ENCODE measurements at regions of chr17 and their contacts with region 1.

Region 1: GRCh38 chr17:39153599-39154051 is 2.2 kb upstream of the PLXDC1 start:
- DNase-seq: peak; percentile 87 to 96 (median 91)
- ATAC-seq: peak; percentile 74
- H3K4me3 ChIP-seq: peak overlapping the region; percentile 91
- H3K4me3 Mint-ChIP-seq: peak overlapping the region; percentile 93 to 100 (median 98)
- H3K27ac ChIP-seq: peak overlapping the region; percentile 61
- H3K27ac Mint-ChIP-seq: peak overlapping the region; percentile 92 to 100 (median 98)
- H3K4me1 ChIP-seq: peaks cover 10 to 26% of the 10 kb centered on the region in 2 donors
- H3K4me1 Mint-ChIP-seq: peaks cover 29 to 51% (median 38%) of the 10 kb centered on the region in 7 donors
- H3K27me3 ChIP-seq: no peaks in the 10 kb centered on the region
- H3K27me3 Mint-ChIP-seq: peaks cover 0 to 54% (median 4%) of the 10 kb centered on the region in 5 donors

Region 2: DNA sequence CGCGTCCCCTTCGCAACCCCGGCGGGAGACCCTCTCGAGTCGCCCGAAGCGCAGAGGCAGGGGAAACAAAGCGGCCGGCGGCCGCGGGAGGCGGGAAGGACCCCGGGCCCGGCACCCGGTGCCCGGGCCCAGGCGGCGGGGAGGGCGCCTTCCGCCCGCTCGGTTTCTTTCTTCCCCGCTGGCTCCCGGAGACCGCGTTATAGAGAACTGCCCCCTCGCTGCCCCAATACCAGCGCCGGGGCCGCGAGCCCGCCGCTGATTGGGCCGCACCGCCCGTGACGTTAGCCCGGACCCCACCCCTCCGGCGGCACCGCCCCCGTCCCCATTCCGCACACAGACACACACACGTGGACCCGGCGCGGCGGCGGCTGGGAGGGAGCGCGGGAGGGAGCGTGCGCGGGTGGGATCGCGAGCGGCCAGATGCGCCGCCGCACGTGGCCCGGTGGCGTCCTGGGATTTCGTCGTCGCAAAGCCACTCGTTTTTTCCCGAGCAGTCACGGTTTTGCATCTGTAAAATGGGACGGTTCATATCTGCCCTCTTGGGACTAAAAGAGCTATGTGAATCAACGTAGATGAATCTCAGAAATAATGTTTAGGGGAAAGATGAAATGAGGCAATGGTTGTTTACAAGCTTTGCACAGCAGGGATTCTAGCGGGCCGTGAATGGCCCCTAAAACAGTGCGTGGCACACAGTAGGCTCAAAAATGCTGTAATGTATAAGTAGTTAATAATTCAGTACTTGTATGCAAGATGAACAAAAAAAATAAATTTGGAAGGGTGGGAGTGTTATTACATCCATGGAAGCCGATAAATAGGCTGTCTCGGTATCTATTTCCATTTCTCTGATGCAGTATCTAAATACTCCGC is 478.6 kb before region 1 on chr17 and contains the start of gene EPOP:
- CTCF ChIA-PET with region 1: no interaction called
- POLR2A ChIA-PET with region 1: no interaction called
- intact Hi-C with region 1: loop called (anchors 5 to 10 kb)
- DNase-seq: peak; percentile 67 to 95 (median 71)
- ATAC-seq: peak; percentile 93
- H3K4me3 ChIP-seq: peak within 1 kb of the TSS; percentile 43
- H3K4me3 Mint-ChIP-seq: peak within 1 kb of the TSS; percentile 63 to 80 (median 75)
- H3K27ac ChIP-seq: peak within 1 kb of the TSS; percentile 54
- H3K27ac Mint-ChIP-seq: peak within 1 kb of the TSS in 4 of 9 donors; percentile 17 to 69 (median 58)
- H3K4me1 ChIP-seq: peaks cover 5 to 7% of the 10 kb centered on the region in 2 donors
- H3K4me1 Mint-ChIP-seq: peaks cover 8 to 30% (median 23%) of the 10 kb centered on the region in 7 donors
- H3K27me3 ChIP-seq: peaks cover 0 to 12% of the 10 kb centered on the region in 2 donors
- H3K27me3 Mint-ChIP-seq: peaks cover 19 to 37% (median 24%) of the 10 kb centered on the region in 5 donors
- total RNA-seq, gene EPOP: 0.19 to 13.4 (median 0.34) TPM

Region 3: DNA sequence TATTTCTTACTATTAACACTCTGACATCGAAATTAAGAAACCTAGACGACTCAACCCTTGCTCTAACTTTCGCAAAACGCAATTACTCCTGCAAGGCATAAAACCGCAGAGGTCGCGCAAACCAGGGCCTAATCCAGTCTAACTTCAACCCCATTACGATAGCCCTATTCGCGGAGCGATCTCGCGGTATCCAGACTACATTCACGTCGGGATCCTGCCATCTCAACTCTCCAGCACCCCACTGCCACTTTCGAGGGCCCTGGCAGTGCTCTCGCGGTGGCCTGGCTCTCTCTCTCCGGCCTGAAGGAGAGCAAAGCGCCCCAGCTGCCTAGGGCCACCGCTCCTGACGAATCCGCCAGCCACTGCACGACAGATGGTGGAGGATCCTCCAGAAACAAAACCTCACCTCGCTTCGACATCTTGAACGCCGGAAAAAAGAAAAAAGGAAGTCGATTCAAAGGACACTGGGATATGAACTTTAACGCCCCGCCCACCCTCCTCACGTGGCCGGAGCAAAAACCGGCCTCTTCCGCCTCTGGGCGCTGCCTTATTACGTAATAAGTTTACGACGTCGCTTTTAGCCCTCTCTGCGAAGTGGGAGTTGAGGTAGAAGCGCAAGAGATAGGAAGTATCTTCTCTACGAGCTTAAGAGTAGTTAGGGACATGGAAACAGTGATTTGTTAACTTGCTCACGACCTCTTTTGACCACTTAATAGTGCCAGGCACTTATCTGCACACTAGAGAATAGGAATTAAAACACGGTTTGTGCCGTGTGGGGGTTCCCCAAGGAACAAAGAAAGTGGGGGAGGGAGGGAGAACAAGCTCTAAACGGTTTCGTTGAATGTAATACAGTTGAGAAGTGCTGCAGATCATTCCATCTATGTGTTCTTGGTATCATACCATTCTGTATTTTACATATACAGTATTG is 300.1 kb before region 1 on chr17 and contains the start of gene RPL23:
- CTCF ChIA-PET with region 1: interaction called, 7 read pairs
- POLR2A ChIA-PET with region 1: interaction called, 9 read pairs
- intact Hi-C with region 1: loop called in 1 of 2 experiments (anchors 1 kb)
- DNase-seq: peak; percentile 67 to 94 (median 91)
- ATAC-seq: peak; percentile 91
- H3K4me3 ChIP-seq: peak within 1 kb of the TSS; percentile 70
- H3K4me3 Mint-ChIP-seq: peak within 1 kb of the TSS; percentile 82 to 98 (median 96)
- H3K27ac ChIP-seq: peak within 1 kb of the TSS; percentile 89
- H3K27ac Mint-ChIP-seq: peak within 1 kb of the TSS; percentile 96 to 100 (median 99)
- H3K4me1 ChIP-seq: peaks cover 16 to 25% of the 10 kb centered on the region in 2 donors
- H3K4me1 Mint-ChIP-seq: peaks cover 34 to 53% (median 45%) of the 10 kb centered on the region in 7 donors
- H3K27me3 ChIP-seq: no peaks in the 10 kb centered on the region
- H3K27me3 Mint-ChIP-seq: no peaks in the 10 kb centered on the region
- total RNA-seq, gene RPL23: 1,312 to 2,438 (median 1,877) TPM

Region 4: DNA sequence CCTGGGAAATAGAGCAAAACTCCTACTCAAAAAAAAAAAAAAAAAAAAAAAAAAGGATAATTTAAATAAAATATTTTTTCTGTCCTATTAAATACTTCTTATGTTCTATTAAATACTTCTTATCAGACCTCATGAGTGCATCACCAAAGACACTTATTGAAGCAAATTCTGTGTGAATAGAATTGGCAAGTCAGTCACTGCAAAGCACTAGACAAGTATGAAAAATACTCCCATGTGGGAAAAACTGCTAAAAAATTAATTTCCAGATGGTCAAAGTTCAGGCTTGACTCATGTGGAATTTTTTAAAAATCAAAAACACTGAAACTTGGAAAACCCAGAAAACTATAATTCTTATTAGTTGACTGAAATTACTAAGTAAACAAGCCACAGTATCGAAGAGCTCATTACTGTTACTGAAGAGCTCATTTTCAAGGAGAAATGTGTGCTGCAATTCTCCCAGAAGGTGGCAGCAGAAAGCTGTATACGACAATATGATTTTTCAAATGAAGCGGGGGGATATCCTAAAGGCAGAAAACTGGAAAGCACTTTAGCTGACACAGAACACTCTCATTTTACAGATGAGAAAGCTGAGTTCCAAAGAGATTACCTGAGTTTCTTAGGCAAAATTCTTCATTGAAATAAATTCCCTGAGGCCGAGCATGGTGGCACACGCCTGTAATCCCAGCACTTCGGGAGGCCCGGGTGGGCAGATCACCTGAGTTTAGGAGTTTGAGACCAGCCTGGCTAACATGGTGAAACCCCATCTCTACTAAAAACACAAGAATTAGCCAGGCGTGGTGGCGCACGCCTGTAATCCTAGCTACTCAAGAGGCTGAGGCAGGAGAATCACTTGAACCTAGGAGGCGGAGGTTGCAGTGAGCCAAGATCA is 170.5 kb before region 1 on chr17:
- CTCF ChIA-PET with region 1: interaction called, 124 read pairs
- POLR2A ChIA-PET with region 1: interaction called, 16 read pairs
- intact Hi-C with region 1: loop called (anchors 1 kb)
- DNase-seq: peak in 7 of 9 donors; percentile 40 to 76 (median 62)
- ATAC-seq: peak; percentile 70
- H3K4me3 ChIP-seq: no peak overlapping the region
- H3K4me3 Mint-ChIP-seq: no peak overlapping the region
- H3K27ac ChIP-seq: no peak overlapping the region
- H3K27ac Mint-ChIP-seq: peak overlapping the region in 1 of 9 donors; percentile 32
- H3K4me1 ChIP-seq: peaks cover 0 to 6% of the 10 kb centered on the region in 2 donors
- H3K4me1 Mint-ChIP-seq: peaks cover 0 to 6% (median 5%) of the 10 kb centered on the region in 7 donors
- H3K27me3 ChIP-seq: no peaks in the 10 kb centered on the region
- H3K27me3 Mint-ChIP-seq: peaks cover 0 to 12% (median 0%) of the 10 kb centered on the region in 5 donors

Region 5: DNA sequence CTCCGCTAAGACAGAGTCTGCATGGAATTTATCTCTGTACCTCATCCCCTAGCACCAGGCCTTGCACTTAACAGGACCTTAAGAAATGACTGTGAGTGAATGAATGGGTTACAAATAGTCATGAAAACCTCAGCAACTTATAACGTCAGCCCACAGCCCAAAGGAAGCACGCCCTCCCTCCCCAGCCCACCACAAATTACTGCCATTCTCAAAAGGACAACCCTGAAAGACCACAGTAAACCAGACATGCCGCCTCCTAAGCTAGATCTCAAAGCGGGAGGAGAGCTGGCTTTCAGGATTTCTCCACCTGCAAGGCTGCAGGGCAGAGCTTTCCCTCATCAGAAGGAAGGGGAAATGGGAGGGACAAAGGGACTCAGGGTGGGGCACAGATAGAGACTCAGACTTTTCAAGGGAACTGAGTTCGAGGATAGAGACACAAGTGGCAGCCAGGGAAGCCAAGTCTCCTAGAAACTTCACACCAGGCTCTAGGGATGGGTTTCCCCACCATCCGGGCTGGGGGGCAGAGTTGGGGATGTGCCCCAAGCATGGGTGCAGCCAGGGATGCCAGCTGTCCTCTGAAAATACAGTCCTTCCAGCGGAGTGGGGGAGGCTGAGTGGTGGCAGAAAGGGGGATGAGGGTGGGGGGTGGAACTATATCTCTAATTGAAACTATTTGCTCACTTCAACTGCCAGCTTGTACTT is 58.9 kb before region 1 on chr17:
- CTCF ChIA-PET with region 1: interaction called, 38 read pairs
- POLR2A ChIA-PET with region 1: interaction called, 43 read pairs
- intact Hi-C with region 1: loop called in 1 of 2 experiments (anchors 1 kb)
- DNase-seq: peak in 7 of 9 donors; percentile 28 to 62 (median 49)
- ATAC-seq: peak; percentile 60
- H3K4me3 ChIP-seq: peak overlapping the region; percentile 20
- H3K4me3 Mint-ChIP-seq: peak overlapping the region; percentile 61 to 92 (median 82)
- H3K27ac ChIP-seq: peak overlapping the region; percentile 64
- H3K27ac Mint-ChIP-seq: peak overlapping the region; percentile 81 to 97 (median 95)
- H3K4me1 ChIP-seq: peaks cover 60 to 88% of the 10 kb centered on the region in 2 donors
- H3K4me1 Mint-ChIP-seq: peaks cover 64 to 95% (median 90%) of the 10 kb centered on the region in 7 donors
- H3K27me3 ChIP-seq: no peaks in the 10 kb centered on the region
- H3K27me3 Mint-ChIP-seq: peaks cover 0 to 3% (median 0%) of the 10 kb centered on the region in 5 donors

Region 6: GRCh38 chr17:39199820-39200069 is 46.1 kb after region 1 on chr17:
- CTCF ChIA-PET with region 1: interaction called, 3 read pairs
- POLR2A ChIA-PET with region 1: interaction called, 17 read pairs
- intact Hi-C with region 1: loop called (anchors 1 to 2 kb)
- DNase-seq: peak in 7 of 9 donors; percentile 61 to 93 (median 89)
- ATAC-seq: peak; percentile 85
- H3K4me3 ChIP-seq: peak overlapping the region; percentile 83
- H3K4me3 Mint-ChIP-seq: peak overlapping the region; percentile 87 to 98 (median 92)
- H3K27ac ChIP-seq: peak overlapping the region; percentile 98
- H3K27ac Mint-ChIP-seq: peak overlapping the region; percentile 93 to 100 (median 99)
- H3K4me1 ChIP-seq: peaks cover 42 to 46% of the 10 kb centered on the region in 2 donors
- H3K4me1 Mint-ChIP-seq: peaks cover 38 to 72% (median 54%) of the 10 kb centered on the region in 7 donors
- H3K27me3 ChIP-seq: no peaks in the 10 kb centered on the region
- H3K27me3 Mint-ChIP-seq: no peaks in the 10 kb centered on the region

Region 7: GRCh38 chr17:39318636-39319035 is 165.0 kb after region 1 on chr17:
- CTCF ChIA-PET with region 1: no interaction called
- POLR2A ChIA-PET with region 1: no interaction called
- intact Hi-C with region 1: no loop called
- DNase-seq: no peak
- ATAC-seq: no peak
- H3K4me3 ChIP-seq: no peak overlapping the region
- H3K4me3 Mint-ChIP-seq: no peak overlapping the region
- H3K27ac ChIP-seq: no peak overlapping the region
- H3K27ac Mint-ChIP-seq: no peak overlapping the region
- H3K4me1 ChIP-seq: no peaks in the 10 kb centered on the region
- H3K4me1 Mint-ChIP-seq: peaks cover 0 to 6% (median 0%) of the 10 kb centered on the region in 7 donors
- H3K27me3 ChIP-seq: no peaks in the 10 kb centered on the region
- H3K27me3 Mint-ChIP-seq: no peaks in the 10 kb centered on the region

Region 8: DNA sequence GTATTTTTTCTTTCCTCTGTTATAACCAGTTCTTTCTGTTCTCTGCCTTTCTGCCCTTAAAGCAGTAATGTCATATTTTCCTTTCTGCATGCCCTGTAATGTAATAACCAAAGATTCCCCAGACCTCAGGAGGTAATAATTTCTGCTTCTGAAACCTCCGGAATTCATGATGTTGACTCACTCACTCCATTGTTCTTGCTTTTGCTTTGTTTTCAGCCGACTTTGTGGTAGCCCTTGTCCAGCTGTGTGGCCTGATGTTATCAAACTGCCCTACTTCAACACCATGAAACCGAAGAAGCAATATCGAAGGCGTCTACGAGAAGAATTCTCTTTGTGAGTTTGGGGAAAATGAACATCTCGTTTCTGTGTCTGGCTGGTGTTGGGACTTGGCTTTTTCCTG is 363.6 kb after region 1 on chr17:
- CTCF ChIA-PET with region 1: no interaction called
- POLR2A ChIA-PET with region 1: no interaction called
- intact Hi-C with region 1: no loop called
- DNase-seq: no peak
- ATAC-seq: no peak
- H3K4me3 ChIP-seq: no peak overlapping the region
- H3K4me3 Mint-ChIP-seq: no peak overlapping the region
- H3K27ac ChIP-seq: no peak overlapping the region
- H3K27ac Mint-ChIP-seq: no peak overlapping the region
- H3K4me1 ChIP-seq: no peaks in the 10 kb centered on the region
- H3K4me1 Mint-ChIP-seq: peaks cover 0 to 6% (median 0%) of the 10 kb centered on the region in 7 donors
- H3K27me3 ChIP-seq: no peaks in the 10 kb centered on the region
- H3K27me3 Mint-ChIP-seq: no peaks in the 10 kb centered on the region